ENCODE measurements at regions of chr1 and their contacts with region 1.

Region 1: GRCh38 chr1:204806943-204807687 is 63.5 kb upstream of the NFASC start:
- DNase-seq: peak; percentile 89
- H3K4me3 ChIP-seq: peak overlapping the region; percentile 18 to 48 (median 42)
- H3K27ac ChIP-seq: peak overlapping the region in 2 of 4 donors; percentile 7 to 51
- H3K4me1 ChIP-seq: peaks cover 0 to 17% (median 4%) of the 10 kb centered on the region in 4 donors
- H3K27me3 ChIP-seq: no peaks in the 10 kb centered on the region
- CTCF ChIP-seq: peak; percentile 94 to 97 (median 96)
- EP300 ChIP-seq: no peak
- POLR2A ChIP-seq: no peak

Region 2: DNA sequence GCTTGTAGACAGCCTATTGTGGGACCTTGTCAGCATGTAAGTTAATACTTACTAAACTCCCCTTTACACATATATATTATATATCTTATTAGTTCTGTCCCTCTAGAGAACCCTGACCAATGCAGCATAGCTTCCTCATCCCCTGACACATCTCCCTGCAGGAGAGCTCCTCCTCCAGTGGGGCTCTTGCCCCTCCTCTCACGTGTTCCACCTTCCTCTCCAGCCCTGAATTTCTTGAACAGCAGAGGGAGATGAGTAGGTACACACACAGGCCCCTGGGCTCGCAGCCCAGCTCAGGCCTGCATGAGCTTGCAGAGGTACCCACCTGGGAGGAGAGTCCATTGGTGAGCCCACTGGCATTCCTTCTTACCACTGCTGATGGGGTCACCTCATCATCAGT is 566.1 kb before region 1 on chr1:
- intact Hi-C with region 1: no loop called
- DNase-seq: no peak
- H3K4me3 ChIP-seq: no peak overlapping the region
- H3K27ac ChIP-seq: no peak overlapping the region
- H3K4me1 ChIP-seq: no peaks in the 10 kb centered on the region
- H3K27me3 ChIP-seq: no peaks in the 10 kb centered on the region
- CTCF ChIP-seq: no peak
- EP300 ChIP-seq: no peak
- POLR2A ChIP-seq: no peak

Region 3: GRCh38 chr1:204941421-204942338 is 134.6 kb after region 1 on chr1:
- intact Hi-C with region 1: loop called (anchors 1 kb)
- DNase-seq: peak; percentile 81
- H3K4me3 ChIP-seq: no peak overlapping the region
- H3K27ac ChIP-seq: peak overlapping the region in 2 of 4 donors; percentile 58
- H3K4me1 ChIP-seq: peaks cover 0 to 17% (median 7%) of the 10 kb centered on the region in 4 donors
- H3K27me3 ChIP-seq: no peaks in the 10 kb centered on the region
- CTCF ChIP-seq: peak; percentile 74 to 94 (median 90)
- EP300 ChIP-seq: no peak
- POLR2A ChIP-seq: no peak